H1 (cell line): ENCODE measurements at regions of chr19 and their contacts with region 1.

Region 1: GRCh38 chr19:5904352-5905113 is at the start of gene VMAC:
- DNase-seq: peak; percentile 99 to 100
- H3K4me3 ChIP-seq: peak within 1 kb of the TSS; percentile 80 to 99 (median 95)
- H3K27ac ChIP-seq: peak within 1 kb of the TSS; percentile 87
- H3K4me1 ChIP-seq: peaks cover 0 to 5% (median 0%) of the 10 kb centered on the region in 4 experiments; a peak in 4 of 7 replicates
- H3K27me3 ChIP-seq: no peaks in the 10 kb centered on the region
- CTCF ChIP-seq: peak in 1 of 3 experiments; percentile 9; a peak in 1 of 4 replicates
- EP300 ChIP-seq: no peak
- POLR2A ChIP-seq: peak in 1 of 2 experiments; percentile 70; a peak in 2 of 3 replicates
- RAD21 ChIP-seq: no peak
- total RNA-seq, gene VMAC: 1.2 and 1.3 TPM in 2 replicates

Region 2: GRCh38 chr19:5891938-5892771 is 12.4 kb before region 1 on chr19:
- CTCF ChIA-PET with region 1: interaction called, 20 read pairs
- POLR2A ChIA-PET with region 1: interaction called, 49 read pairs
- DNase-seq: peak in 1 of 2 experiments; percentile 70
- H3K4me3 ChIP-seq: no peak overlapping the region
- H3K27ac ChIP-seq: no peak overlapping the region
- H3K4me1 ChIP-seq: peaks cover 0 to 11% (median 4%) of the 10 kb centered on the region in 4 experiments; a peak in 5 of 7 replicates
- H3K27me3 ChIP-seq: peaks cover 0 to 1% (median 0%) of the 10 kb centered on the region in 4 experiments; a peak in 3 of 7 replicates
- CTCF ChIP-seq: peak; percentile 72 to 80 (median 75)
- EP300 ChIP-seq: no peak
- POLR2A ChIP-seq: peak in 1 of 2 experiments; percentile 56; a peak in 1 of 3 replicates
- RAD21 ChIP-seq: peak; percentile 78 to 79